ENCODE measurements at regions of chr12 and their contacts with region 1.

Region 1: GRCh38 chr12:66217342-66217917 is 28.4 kb downstream of the IRAK3 start:
- DNase-seq: no peak
- ATAC-seq: peak; percentile 71
- H3K4me3 Mint-ChIP-seq: peak overlapping the region; percentile 55
- H3K27ac Mint-ChIP-seq: peak overlapping the region; percentile 89
- H3K4me1 Mint-ChIP-seq: peaks cover 30% of the 10 kb centered on the region
- H3K27me3 Mint-ChIP-seq: no peaks in the 10 kb centered on the region
- CTCF ChIP-seq: no peak

Region 2: DNA sequence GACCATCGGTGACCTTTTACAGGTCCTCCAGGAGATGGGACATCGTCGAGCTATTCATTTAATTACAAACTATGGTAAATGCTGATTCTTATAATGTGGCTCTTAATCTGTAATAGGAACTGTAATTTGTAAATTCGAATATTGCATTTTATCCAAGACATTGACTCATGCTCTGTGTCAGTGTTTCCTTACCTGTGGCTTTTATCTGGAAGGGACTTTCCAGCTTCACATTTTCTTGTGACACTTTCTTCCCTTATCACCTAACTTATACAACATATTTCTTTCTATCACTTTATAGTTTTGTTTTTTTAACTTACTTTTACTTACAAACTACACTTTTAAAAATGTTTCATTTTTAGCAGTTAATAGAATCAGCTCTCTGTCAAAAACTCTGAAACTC is 13.6 kb before region 1 on chr12:
- CTCF ChIA-PET with region 1: no interaction called
- POLR2A ChIA-PET with region 1: interaction called, 3 read pairs
- intact Hi-C with region 1: loop called (anchors 2 kb)
- DNase-seq: no peak
- ATAC-seq: no peak
- H3K4me3 Mint-ChIP-seq: no peak overlapping the region
- H3K27ac Mint-ChIP-seq: peak overlapping the region; percentile 10
- H3K4me1 Mint-ChIP-seq: peaks cover 10% of the 10 kb centered on the region
- H3K27me3 Mint-ChIP-seq: peaks cover 13% of the 10 kb centered on the region
- CTCF ChIP-seq: no peak

Region 3: GRCh38 chr12:66241061-66242043 is 23.9 kb after region 1 on chr12:
- CTCF ChIA-PET with region 1: no interaction called
- POLR2A ChIA-PET with region 1: no interaction called
- intact Hi-C with region 1: no loop called
- DNase-seq: no peak
- ATAC-seq: no peak
- H3K4me3 Mint-ChIP-seq: no peak overlapping the region
- H3K27ac Mint-ChIP-seq: no peak overlapping the region
- H3K4me1 Mint-ChIP-seq: peaks cover 14% of the 10 kb centered on the region
- H3K27me3 Mint-ChIP-seq: peaks cover 3% of the 10 kb centered on the region
- CTCF ChIP-seq: no peak

Measured in activated B cell treated with CpG ODN at 0.5 μM for 24 hours (primary cell).